ENCODE measurements at regions of chr10 and their contacts with region 1.

Region 1: DNA sequence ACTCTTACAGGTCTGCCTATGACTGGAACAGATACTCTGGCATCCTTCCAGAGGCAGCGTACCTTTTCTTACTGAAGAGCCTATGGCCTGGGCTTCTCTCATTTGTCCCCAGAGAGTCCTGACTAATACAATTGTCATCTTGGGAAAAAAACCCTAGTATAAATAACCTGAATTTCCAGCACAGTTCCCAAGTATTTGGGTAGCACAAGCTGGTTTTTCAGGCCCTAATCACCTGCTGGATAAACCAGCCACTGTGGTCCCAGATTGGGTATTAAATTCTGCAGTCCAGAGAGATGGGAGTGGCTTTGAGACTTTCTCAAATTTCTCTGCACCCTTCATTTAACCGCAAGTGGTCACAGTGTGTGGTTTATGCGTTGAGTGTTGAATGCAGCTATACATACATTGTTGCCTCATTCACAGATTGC is 186.8 kb upstream of the NEBL start:
- DNase-seq: no peak
- ATAC-seq: no peak
- H3K4me3 ChIP-seq: no peak overlapping the region
- H3K27ac ChIP-seq: no peak overlapping the region
- H3K4me1 ChIP-seq: no peaks in the 10 kb centered on the region
- H3K27me3 ChIP-seq: no peaks in the 10 kb centered on the region
- CTCF ChIP-seq: no peak
- POLR2A ChIP-seq: no peak
- RAD21 ChIP-seq: no peak

Region 2: GRCh38 chr10:21273400-21273932 is 189.6 kb after region 1 on chr10:
- CTCF ChIA-PET with region 1: no interaction called
- POLR2A ChIA-PET with region 1: no interaction called
- dilution Hi-C with region 1: no loop called
- in situ Hi-C with region 1: loop called (anchors 5 kb)
- intact Hi-C with region 1: no loop called
- DNase-seq: no peak
- ATAC-seq: no peak
- H3K4me3 ChIP-seq: no peak overlapping the region
- H3K27ac ChIP-seq: no peak overlapping the region
- H3K4me1 ChIP-seq: no peaks in the 10 kb centered on the region
- H3K27me3 ChIP-seq: peaks cover 2% of the 10 kb centered on the region; the same call in 1 of the 2 replicates
- CTCF ChIP-seq: no peak
- POLR2A ChIP-seq: no peak
- RAD21 ChIP-seq: no peak

Measured in IMR-90 (cell line).